Colonic mucosa (tissue), 4 donors: ENCODE measurements at regions of chr3 and their contacts with region 1.

Region 1: DNA sequence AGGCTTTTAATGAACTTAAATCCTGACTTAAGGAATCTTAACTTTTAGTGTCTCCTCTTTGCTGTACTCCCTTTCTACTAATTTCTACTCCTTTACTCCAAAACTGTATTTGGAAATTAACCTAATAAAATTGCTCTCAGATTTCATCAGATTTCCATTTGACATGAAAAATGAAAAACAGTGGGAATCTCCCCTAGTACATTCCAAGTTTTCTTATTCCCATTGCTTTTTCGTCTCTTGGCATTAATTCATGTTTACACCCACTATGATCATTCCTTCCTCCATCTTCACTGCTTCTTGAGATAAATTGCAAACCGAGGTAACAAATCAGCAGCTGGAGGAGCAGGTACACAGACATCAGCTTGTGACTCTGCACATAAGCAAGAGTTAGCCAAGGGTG is 208.7 kb downstream of the VGLL3 start:
- DNase-seq: no peak
- H3K4me3 ChIP-seq: no peak overlapping the region
- H3K27ac ChIP-seq: no peak overlapping the region
- H3K4me1 ChIP-seq: no peaks in the 10 kb centered on the region
- H3K27me3 ChIP-seq: no peaks in the 10 kb centered on the region
- CTCF ChIP-seq: no peak

Region 2: DNA sequence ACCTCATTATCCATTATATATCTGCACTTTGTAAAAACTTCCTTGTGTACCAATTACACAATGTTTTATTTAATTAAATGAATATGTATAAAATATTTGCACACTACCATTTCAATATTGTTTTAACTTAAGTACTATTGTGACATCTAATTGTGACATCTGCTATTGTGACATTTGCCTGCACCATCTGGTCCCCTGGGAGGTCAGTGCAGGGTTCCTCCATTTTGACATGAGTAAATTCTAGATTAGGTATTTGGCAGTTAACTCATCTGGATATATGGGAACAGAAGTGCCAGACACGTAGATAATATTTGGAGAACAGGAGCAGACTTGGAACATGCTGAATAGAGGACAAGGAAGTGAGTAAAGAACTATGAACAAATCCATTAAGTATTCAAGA is 123.4 kb before region 1 on chr3:
- intact Hi-C with region 1: no loop called
- DNase-seq: no peak
- H3K4me3 ChIP-seq: no peak overlapping the region
- H3K27ac ChIP-seq: no peak overlapping the region
- H3K4me1 ChIP-seq: no peaks in the 10 kb centered on the region
- H3K27me3 ChIP-seq: no peaks in the 10 kb centered on the region
- CTCF ChIP-seq: no peak

Region 3: GRCh38 chr3:87088993-87089841 is 306.9 kb after region 1 on chr3:
- intact Hi-C with region 1: loop called (anchors 5 kb)
- DNase-seq: peak; percentile 55
- H3K4me3 ChIP-seq: peak overlapping the region; percentile 65
- H3K27ac ChIP-seq: peak overlapping the region; percentile 68
- H3K4me1 ChIP-seq: no peaks in the 10 kb centered on the region
- H3K27me3 ChIP-seq: no peaks in the 10 kb centered on the region
- CTCF ChIP-seq: no peak